Mammary epithelial cell (primary cell): ENCODE measurements at regions of chr5 and their contacts with region 1.

Region 1: GRCh38 chr5:146765089-146765832 is 113.3 kb downstream of the PPP2R2B start:
- DNase-seq: no peak
- H3K4me3 ChIP-seq: no peak overlapping the region
- H3K27ac ChIP-seq: no peak overlapping the region
- H3K4me1 ChIP-seq: no peaks in the 10 kb centered on the region
- H3K27me3 ChIP-seq: no peaks in the 10 kb centered on the region
- CTCF ChIP-seq: no peak

Region 2: DNA sequence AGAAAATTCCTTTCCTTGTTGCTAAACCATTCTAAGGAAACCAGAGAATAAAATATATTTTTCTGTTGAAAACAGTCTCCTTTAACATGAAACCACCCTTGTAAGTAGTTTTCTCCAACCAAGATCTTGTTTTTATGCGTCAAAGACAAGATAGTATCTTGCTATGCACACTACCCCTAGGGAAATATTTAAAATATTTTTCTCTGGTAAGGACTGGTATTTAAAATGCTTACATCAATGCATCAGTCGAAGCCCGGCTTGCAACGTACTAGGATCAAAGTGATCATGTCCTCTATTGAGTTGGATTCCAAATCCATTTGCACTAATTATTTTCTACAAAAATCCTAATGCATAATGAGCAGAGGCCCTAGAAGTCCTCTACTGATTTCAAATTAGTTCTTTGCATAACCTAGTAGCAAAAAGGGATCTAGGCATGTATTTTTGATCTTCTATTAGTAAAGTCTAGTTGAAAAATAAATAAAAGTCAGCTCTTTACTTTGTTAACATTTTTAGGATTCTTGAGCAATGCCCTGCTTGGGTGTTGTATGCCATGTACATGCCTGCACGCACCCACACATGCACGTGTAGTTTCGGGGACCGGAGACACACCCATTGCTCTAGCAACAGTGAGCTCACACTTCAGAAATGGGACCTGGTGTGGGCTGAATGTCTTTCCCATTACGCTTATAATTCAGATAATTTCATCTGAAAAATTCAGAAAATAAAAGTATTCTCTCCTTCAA is 84.3 kb before region 1 on chr5:
- CTCF ChIA-PET with region 1: no interaction called
- dilution Hi-C with region 1: no loop called
- in situ Hi-C with region 1: no loop called
- intact Hi-C with region 1: no loop called
- DNase-seq: peak; percentile 37
- H3K4me3 ChIP-seq: no peak overlapping the region
- H3K27ac ChIP-seq: no peak overlapping the region
- H3K4me1 ChIP-seq: no peaks in the 10 kb centered on the region
- H3K27me3 ChIP-seq: no peaks in the 10 kb centered on the region
- CTCF ChIP-seq: no peak

Region 3: DNA sequence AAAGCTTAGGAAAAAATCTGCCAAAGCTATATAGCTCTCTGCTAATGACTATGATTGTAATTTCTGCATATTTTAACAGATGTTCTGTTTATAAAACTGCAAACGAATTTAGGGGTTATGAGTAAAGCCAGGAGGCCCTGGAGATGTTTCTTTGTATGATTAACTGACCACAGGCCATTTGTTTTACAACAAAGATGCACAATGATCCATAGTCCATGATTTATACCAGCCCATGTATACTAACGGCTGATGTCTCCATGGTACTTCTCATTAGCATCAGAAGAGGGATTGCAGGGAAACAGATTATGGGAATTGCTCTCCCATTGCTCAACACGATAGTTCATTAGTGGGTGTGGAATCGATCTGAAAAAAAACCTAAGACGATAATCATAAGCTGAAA is 34.4 kb after region 1 on chr5:
- CTCF ChIA-PET with region 1: no interaction called
- dilution Hi-C with region 1: loop called (anchors 5 kb)
- in situ Hi-C with region 1: no loop called
- intact Hi-C with region 1: no loop called
- DNase-seq: no peak
- H3K4me3 ChIP-seq: no peak overlapping the region
- H3K27ac ChIP-seq: no peak overlapping the region
- H3K4me1 ChIP-seq: no peaks in the 10 kb centered on the region
- H3K27me3 ChIP-seq: peaks cover 2% of the 10 kb centered on the region
- CTCF ChIP-seq: no peak